HepG2 (cell line): ENCODE measurements at regions of chr6 and their contacts with region 1.

Region 1: DNA sequence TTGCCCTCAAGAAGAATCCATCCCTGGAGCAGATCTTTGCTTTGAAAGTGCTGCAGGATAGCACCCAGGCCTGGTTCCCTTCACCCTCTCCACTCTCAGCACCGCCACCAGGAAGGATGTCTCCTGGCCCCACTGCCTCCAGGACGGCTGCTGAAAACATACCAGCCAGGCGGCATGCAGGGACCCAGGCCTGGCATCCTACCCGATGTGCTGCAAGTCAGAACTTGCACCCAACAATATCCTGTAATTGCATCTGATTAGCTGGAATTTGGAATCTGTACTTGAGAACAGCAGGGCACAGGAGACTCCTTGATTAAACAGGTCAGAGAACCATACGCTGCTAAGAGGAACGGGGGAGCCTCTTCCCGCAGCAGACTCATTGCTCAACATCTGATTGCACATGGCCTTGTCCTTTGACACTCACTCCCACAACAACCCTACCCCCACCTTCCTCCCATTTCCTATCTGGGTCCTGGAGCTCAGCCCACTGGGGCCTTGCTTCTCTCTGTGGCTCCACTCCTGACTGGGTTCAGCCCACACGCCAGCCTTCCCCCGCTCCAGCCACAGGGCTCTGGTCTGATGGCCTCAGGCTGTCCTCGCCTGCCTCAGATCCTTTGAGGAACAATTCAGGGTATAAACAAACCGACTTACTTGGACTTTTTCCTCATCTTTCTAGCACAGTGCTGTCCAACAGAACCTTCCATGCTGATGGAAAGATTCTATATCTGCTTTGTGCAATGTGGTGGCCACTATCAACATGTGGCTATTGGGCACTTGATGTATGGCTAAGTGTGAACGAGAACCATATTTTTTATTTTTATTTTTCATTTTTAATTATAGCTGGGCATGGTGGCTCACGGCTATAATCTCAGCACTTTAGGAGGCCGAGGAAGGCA is 78.0 kb downstream of the FGD2 start:
- DNase-seq: peak; percentile 96
- ATAC-seq: peak; percentile 96
- H3K4me3 ChIP-seq: peak overlapping the region; percentile 3 to 57 (median 15); a peak in 2 of 6 replicates
- H3K27ac ChIP-seq: peak overlapping the region; percentile 74
- H3K4me1 ChIP-seq: peaks cover 76% of the 10 kb centered on the region
- H3K27me3 ChIP-seq: no peaks in the 10 kb centered on the region
- CTCF ChIP-seq: peak; percentile 49
- EP300 ChIP-seq: peak; percentile 95 to 98
- POLR2A ChIP-seq: peak; percentile 33 to 50; a peak in 1 of 4 replicates
- RAD21 ChIP-seq: peak; percentile 66

Region 2: GRCh38 chr6:37029249-37029971 is 54.1 kb before region 1 on chr6:
- CTCF ChIA-PET with region 1: no interaction called
- POLR2A ChIA-PET with region 1: no interaction called
- in situ Hi-C with region 1: no loop called
- intact Hi-C with region 1: no loop called
- DNase-seq: peak; percentile 84
- ATAC-seq: peak; percentile 89
- H3K4me3 ChIP-seq: no peak overlapping the region
- H3K27ac ChIP-seq: no peak overlapping the region
- H3K4me1 ChIP-seq: peaks cover 43% of the 10 kb centered on the region
- H3K27me3 ChIP-seq: peaks cover 4 to 47% of the 10 kb centered on the region in 2 experiments
- CTCF ChIP-seq: peak; percentile 97
- EP300 ChIP-seq: no peak; a peak in 1 of 4 replicates
- POLR2A ChIP-seq: no peak
- RAD21 ChIP-seq: peak; percentile 99

Region 3: GRCh38 chr6:37059344-37060206 is 23.9 kb before region 1 on chr6:
- CTCF ChIA-PET with region 1: no interaction called
- POLR2A ChIA-PET with region 1: interaction called, 13 read pairs
- in situ Hi-C with region 1: no loop called
- intact Hi-C with region 1: no loop called
- DNase-seq: peak; percentile 99
- ATAC-seq: peak; percentile 91
- H3K4me3 ChIP-seq: peak overlapping the region; percentile 32 to 67 (median 44); a peak in 5 of 6 replicates
- H3K27ac ChIP-seq: peak overlapping the region; percentile 97
- H3K4me1 ChIP-seq: peaks cover 76% of the 10 kb centered on the region
- H3K27me3 ChIP-seq: no peaks in the 10 kb centered on the region
- CTCF ChIP-seq: peak; percentile 92
- EP300 ChIP-seq: peak; percentile 89 to 96; a peak in 3 of 4 replicates
- POLR2A ChIP-seq: peak in 1 of 2 experiments; percentile 85; a peak in 2 of 4 replicates
- RAD21 ChIP-seq: peak; percentile 96

Region 4: GRCh38 chr6:37095997-37096396 is 12.5 kb after region 1 on chr6:
- CTCF ChIA-PET with region 1: no interaction called
- POLR2A ChIA-PET with region 1: interaction called, 73 read pairs
- in situ Hi-C with region 1: no loop called
- intact Hi-C with region 1: no loop called
- DNase-seq: no peak
- ATAC-seq: no peak
- H3K4me3 ChIP-seq: no peak overlapping the region
- H3K27ac ChIP-seq: no peak overlapping the region
- H3K4me1 ChIP-seq: peaks cover 82% of the 10 kb centered on the region
- H3K27me3 ChIP-seq: no peaks in the 10 kb centered on the region
- CTCF ChIP-seq: no peak
- EP300 ChIP-seq: no peak
- POLR2A ChIP-seq: no peak
- RAD21 ChIP-seq: no peak

Region 5: GRCh38 chr6:37396476-37397180 is 313.1 kb after region 1 on chr6:
- CTCF ChIA-PET with region 1: no interaction called
- POLR2A ChIA-PET with region 1: no interaction called
- in situ Hi-C with region 1: no loop called
- intact Hi-C with region 1: no loop called
- DNase-seq: no peak
- ATAC-seq: peak; percentile 29
- H3K4me3 ChIP-seq: no peak overlapping the region
- H3K27ac ChIP-seq: no peak overlapping the region
- H3K4me1 ChIP-seq: no peaks in the 10 kb centered on the region
- H3K27me3 ChIP-seq: peaks cover 0 to 4% of the 10 kb centered on the region in 2 experiments; a peak in 1 of 5 replicates
- CTCF ChIP-seq: no peak
- EP300 ChIP-seq: no peak
- POLR2A ChIP-seq: no peak
- RAD21 ChIP-seq: no peak